Activated T-helper 2 cell treated with anti-CD3 and anti-CD28 coated beads, Interferon-gamma antibody, Interleukin-2, Interleukin-4, amounts not matched to agents 10 μg/mL and 5 μg/mL and 100 μg/mL, durations not matched to agents 14 hours and 24 hours and 36 hours (primary cell): ENCODE measurements at regions of chr15 and their contacts with region 1.

Region 1: DNA sequence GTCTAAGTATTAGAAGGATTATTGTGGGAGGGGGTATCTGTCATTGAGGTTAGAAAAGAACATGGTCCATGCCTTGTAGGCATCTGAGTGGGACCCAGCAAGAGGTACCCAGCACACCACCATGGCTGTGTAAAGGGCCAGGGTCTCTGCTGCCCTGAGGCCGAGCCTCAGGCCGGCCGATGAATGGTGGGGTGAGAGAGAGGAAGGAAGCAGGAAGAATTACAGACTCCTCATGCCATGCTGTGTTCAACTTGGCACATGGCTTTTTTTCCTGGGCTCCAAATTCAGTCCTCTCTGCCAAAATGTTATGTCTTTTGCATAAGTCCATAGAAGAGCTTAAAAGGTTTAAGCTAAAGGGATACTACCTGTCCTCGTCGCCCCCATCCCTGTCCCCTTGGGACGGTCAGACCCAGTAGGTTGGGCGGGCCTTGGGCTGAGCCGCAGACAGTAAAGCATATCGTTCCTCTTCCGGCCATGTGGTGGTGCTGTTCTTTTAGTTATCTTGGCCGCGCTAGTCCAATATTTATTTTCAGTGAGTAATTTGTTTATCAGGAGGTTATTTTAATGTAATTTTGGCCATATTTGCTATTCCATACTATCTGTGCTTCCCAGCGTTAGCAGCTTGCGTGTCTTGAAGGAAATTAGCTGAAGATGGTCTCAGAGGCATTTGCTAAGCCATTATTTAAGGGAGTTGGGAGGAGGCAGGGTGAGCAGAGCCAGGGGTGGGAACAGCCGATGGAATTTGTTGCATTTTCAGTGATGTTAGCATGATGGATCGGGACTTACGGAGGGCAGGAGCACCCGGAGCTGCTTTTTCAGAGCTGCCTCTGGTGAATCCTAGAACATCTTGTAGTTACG is 152.4 kb downstream of the AGBL1 start:
- DNase-seq: no peak
- H3K4me3 Mint-ChIP-seq: no peak overlapping the region
- H3K27ac Mint-ChIP-seq: no peak overlapping the region
- H3K4me1 Mint-ChIP-seq: peaks cover 5% of the 10 kb centered on the region
- H3K27me3 Mint-ChIP-seq: peaks cover 19% of the 10 kb centered on the region

Region 2: DNA sequence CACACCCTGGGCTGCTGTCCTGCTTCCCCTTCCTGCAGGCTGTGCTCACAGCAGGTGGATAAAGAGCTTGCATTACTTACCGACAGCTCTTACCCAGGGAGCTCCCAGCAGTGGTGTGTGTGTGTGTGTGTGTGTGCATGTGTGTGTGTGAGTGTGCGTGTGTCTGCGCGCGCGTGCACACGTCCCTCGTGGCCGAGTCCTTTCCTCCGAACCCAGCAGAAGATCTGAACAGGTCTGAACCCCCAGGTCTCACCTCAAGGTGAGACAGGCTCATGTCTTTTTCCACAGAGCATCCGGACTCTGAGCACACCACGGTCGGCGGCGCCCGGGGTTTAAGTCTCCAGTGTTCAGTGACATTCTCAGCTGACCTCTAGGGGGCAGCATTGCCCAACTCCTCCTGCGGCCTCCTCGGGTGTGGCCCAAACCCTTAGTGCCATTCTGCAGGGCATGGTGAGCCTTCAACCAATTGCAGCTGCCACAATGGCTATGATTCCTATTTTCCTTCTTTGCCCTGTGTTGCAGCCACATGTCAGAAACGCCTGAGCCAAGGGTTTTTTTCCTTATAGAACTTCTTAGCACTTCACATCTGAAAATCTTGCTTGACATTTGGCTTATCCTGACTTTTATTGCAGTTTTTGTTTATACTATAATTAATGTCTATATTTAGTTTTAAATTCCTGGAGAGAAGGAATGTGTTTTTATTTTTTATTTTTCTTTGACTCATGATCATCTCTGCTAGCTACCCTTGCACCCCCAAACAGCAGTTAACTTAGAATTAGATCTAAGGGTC is 373.3 kb before region 1 on chr15:
- intact Hi-C with region 1: loop called (anchors 10 kb)
- DNase-seq: peak; percentile 61
- H3K4me3 Mint-ChIP-seq: peak overlapping the region; percentile 47
- H3K27ac Mint-ChIP-seq: no peak overlapping the region
- H3K4me1 Mint-ChIP-seq: peaks cover 6% of the 10 kb centered on the region
- H3K27me3 Mint-ChIP-seq: peaks cover 28% of the 10 kb centered on the region

Region 3: GRCh38 chr15:87604857-87605446 is 1372.9 kb after region 1 on chr15:
- intact Hi-C with region 1: loop called (anchors 10 kb)
- DNase-seq: no peak
- H3K4me3 Mint-ChIP-seq: no peak overlapping the region
- H3K27ac Mint-ChIP-seq: no peak overlapping the region
- H3K4me1 Mint-ChIP-seq: no peaks in the 10 kb centered on the region
- H3K27me3 Mint-ChIP-seq: peaks cover 4% of the 10 kb centered on the region